ENCODE measurements at regions of chr2 and their contacts with region 1.

Region 1: DNA sequence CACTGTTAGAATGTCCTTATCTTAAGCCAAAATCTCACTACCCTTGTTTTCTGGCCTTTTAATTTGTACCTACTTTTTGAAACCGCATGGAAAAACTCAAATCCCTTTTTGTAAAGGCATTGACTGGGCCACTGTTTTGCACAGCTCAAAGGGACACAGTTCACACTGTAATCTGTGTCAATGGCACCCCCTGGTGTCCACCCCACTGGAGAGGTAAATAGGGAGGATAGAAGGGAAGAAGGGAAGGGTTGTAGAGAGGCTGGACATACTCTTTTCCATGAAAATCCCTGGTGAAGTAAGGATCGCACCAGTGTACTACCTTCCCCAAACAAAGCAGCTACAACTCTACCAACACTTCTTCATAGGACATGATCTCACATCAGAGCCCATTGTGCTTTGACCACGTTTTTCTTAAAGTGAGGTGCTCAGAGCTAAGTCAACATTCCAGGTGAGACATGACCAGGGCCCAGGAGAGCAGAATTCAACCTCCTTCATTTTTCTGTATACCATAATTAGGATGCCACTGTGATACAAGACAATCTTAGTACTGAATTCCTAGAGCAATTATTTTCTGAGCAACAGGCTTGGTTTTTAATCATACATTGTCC is 92.4 kb upstream of the RMDN2 start:
- DNase-seq: peak; percentile 86
- ATAC-seq: peak; percentile 67
- H3K4me3 ChIP-seq: no peak overlapping the region
- H3K27ac ChIP-seq: peak overlapping the region; percentile 39; the same call in 1 of the 2 replicates
- H3K4me1 ChIP-seq: peaks cover 34% of the 10 kb centered on the region
- H3K27me3 ChIP-seq: no peaks in the 10 kb centered on the region
- CTCF ChIP-seq: peak; percentile 88
- POLR2A ChIP-seq: no peak
- RAD21 ChIP-seq: peak; percentile 97

Region 2: GRCh38 chr2:37464067-37464466 is 368.6 kb before region 1 on chr2:
- CTCF ChIA-PET with region 1: no interaction called
- POLR2A ChIA-PET with region 1: no interaction called
- dilution Hi-C with region 1: no loop called
- in situ Hi-C with region 1: no loop called
- intact Hi-C with region 1: loop called (anchors 5 kb)
- DNase-seq: no peak
- ATAC-seq: no peak
- H3K4me3 ChIP-seq: no peak overlapping the region
- H3K27ac ChIP-seq: no peak overlapping the region
- H3K4me1 ChIP-seq: peaks cover 14% of the 10 kb centered on the region
- H3K27me3 ChIP-seq: no peaks in the 10 kb centered on the region
- CTCF ChIP-seq: no peak
- POLR2A ChIP-seq: no peak
- RAD21 ChIP-seq: no peak

Region 3: DNA sequence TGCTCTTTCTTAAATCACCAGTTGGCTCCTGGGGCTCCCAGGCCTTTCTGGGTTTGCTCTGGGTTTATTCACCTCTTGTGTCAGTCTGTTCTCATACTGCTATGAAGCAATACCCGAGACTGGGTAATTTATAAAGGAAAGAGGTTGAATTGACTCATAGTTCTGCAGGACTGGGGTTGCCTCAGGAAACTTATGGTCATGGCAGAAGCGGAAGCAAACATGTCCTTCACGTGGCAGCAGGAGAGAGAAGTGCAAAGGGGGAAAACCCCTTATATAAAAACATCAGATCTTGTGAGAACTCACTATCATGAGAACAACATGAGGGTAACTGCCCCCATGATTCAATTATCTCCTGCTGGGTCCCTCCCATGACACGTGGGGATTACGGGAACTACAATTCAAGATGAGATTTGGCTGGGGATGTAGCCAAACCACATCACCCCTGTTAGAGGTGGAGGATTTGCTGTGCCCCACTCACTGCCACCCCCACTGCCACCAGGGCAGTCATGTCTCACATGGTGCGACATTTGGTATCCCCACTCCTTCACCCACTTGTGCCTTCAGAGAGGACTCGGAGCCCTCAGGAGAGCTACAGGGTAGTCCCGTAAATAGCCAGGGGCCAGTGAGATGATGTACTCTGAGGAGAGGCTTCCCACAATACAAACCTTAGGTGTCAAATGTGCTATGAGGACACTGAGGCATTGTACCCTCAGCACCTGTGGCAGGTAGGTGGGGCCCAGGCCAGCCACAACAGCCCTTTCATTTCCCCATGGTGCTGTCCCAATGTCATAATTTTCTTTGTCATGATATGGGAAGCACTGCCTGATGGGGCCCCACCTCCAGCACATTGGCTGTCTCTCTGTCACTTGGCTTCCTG is 197.0 kb before region 1 on chr2:
- CTCF ChIA-PET with region 1: no interaction called
- POLR2A ChIA-PET with region 1: no interaction called
- dilution Hi-C with region 1: no loop called
- in situ Hi-C with region 1: no loop called
- intact Hi-C with region 1: loop called (anchors 2 kb)
- DNase-seq: peak; percentile 82
- ATAC-seq: no peak
- H3K4me3 ChIP-seq: no peak overlapping the region
- H3K27ac ChIP-seq: no peak overlapping the region
- H3K4me1 ChIP-seq: peaks cover 12% of the 10 kb centered on the region
- H3K27me3 ChIP-seq: no peaks in the 10 kb centered on the region
- CTCF ChIP-seq: no peak
- POLR2A ChIP-seq: no peak
- RAD21 ChIP-seq: no peak

Region 4: DNA sequence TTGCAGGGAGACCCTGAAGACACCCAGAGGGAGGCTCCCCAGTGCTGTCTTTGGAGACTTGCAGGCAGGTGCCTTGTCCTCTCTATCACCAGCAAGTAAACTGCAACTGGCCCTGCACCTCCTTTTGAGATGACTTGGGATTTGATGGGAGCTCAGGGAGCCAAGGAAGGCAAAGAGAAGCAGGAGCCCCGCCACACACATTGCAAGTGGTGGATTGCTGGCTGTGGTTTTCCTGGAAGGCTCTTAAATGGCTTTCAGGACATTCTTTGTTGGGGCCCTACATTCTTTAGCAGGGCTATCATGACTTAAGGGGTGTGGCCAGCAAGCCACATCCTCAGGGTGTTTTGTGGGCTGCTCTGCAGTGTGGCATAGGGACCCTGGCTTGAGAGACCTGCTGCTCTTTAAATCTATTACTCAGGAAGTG is 121.4 kb before region 1 on chr2:
- CTCF ChIA-PET with region 1: no interaction called
- POLR2A ChIA-PET with region 1: no interaction called
- dilution Hi-C with region 1: no loop called
- in situ Hi-C with region 1: no loop called
- intact Hi-C with region 1: loop called (anchors 5 kb)
- DNase-seq: peak; percentile 91
- ATAC-seq: peak; percentile 88
- H3K4me3 ChIP-seq: no peak overlapping the region
- H3K27ac ChIP-seq: peak overlapping the region; percentile 71
- H3K4me1 ChIP-seq: peaks cover 12% of the 10 kb centered on the region
- H3K27me3 ChIP-seq: no peaks in the 10 kb centered on the region
- CTCF ChIP-seq: no peak
- POLR2A ChIP-seq: peak; percentile 39; the same call in 1 of the 2 replicates
- RAD21 ChIP-seq: no peak

Region 5: GRCh38 chr2:37781028-37781427 is 51.7 kb before region 1 on chr2:
- CTCF ChIA-PET with region 1: no interaction called
- POLR2A ChIA-PET with region 1: interaction called, 9 read pairs
- dilution Hi-C with region 1: no loop called
- in situ Hi-C with region 1: no loop called
- intact Hi-C with region 1: loop called (anchors 2 kb)
- DNase-seq: peak; percentile 86
- ATAC-seq: peak; percentile 16
- H3K4me3 ChIP-seq: no peak overlapping the region
- H3K27ac ChIP-seq: peak overlapping the region; percentile 63
- H3K4me1 ChIP-seq: peaks cover 63% of the 10 kb centered on the region
- H3K27me3 ChIP-seq: no peaks in the 10 kb centered on the region
- CTCF ChIP-seq: no peak
- POLR2A ChIP-seq: no peak
- RAD21 ChIP-seq: no peak

Region 6: GRCh38 chr2:37877457-37878315 is 45.0 kb after region 1 on chr2:
- CTCF ChIA-PET with region 1: interaction called, 5 read pairs
- POLR2A ChIA-PET with region 1: no interaction called
- dilution Hi-C with region 1: no loop called
- in situ Hi-C with region 1: no loop called
- intact Hi-C with region 1: loop called (anchors 2 kb)
- DNase-seq: peak; percentile 68
- ATAC-seq: peak; percentile 93
- H3K4me3 ChIP-seq: no peak overlapping the region
- H3K27ac ChIP-seq: no peak overlapping the region
- H3K4me1 ChIP-seq: no peaks in the 10 kb centered on the region
- H3K27me3 ChIP-seq: peaks cover 4% of the 10 kb centered on the region; the same call in 1 of the 2 replicates
- CTCF ChIP-seq: peak; percentile 82
- POLR2A ChIP-seq: no peak
- RAD21 ChIP-seq: peak; percentile 95

Measured in IMR-90 (cell line).